Posterior vena cava (tissue), 2 donors: ENCODE measurements at regions of chr17 and their contacts with region 1.

Region 1: GRCh38 chr17:67390646-67391384 is 13.7 kb downstream of the PITPNC1 start:
- DNase-seq: no peak

Region 2: DNA sequence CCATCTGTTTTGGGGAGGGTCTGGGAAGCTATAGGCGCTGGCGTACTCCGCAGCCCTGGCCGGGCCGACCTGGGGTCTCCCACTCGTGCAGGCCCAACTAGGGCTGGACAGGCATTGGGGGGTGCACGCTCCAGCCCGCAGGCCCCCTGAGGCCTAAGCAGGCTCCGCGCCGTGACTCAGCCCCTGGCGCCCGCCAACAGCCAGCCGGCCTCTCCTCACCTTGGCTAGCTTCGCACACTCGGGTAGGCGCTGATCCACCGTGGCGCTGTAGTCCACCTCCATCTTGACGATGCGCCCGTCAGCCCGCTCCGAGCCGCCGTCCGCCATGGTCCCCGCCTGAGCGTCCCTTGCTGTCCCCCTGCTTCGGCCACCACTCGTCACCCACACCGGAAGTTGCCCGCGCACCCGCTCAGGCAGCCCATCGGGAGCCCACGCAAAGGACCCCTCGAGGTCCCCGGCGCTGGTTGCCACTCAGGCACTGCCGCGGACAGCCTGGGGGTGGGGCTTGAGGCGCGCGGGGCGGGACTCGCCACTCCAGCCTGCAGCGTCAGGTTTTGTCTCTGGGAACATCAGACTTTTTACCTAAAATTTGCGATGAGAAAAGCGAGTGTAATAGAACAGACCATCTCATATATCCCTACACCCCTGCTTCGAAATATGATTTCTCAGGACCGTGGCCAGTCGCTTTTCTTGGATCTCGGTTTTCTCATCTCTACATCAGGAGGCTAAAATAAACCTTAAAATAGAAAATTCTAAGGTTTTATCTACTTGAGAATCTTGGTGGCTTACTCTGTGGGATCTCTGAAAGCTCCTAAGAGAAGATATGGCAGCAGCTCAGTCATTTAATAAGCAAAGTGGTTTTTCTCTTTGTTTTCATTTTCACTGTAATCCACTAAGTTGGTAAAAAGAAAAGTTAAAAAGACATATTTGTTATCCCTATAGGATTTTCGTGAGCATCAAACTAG is 24.3 kb before region 1 on chr17 and contains the start of gene PSMD12:
- intact Hi-C with region 1: no loop called
- DNase-seq: peak; percentile 98
- total RNA-seq, gene PSMD12: 43.5 to 63.0 TPM

Region 3: GRCh38 chr17:67376737-67377487 is 13.9 kb before region 1 on chr17 and contains the start of gene PITPNC1:
- intact Hi-C with region 1: no loop called
- DNase-seq: peak; percentile 96
- total RNA-seq, gene PITPNC1: 22.3 to 24.3 TPM

Region 4: DNA sequence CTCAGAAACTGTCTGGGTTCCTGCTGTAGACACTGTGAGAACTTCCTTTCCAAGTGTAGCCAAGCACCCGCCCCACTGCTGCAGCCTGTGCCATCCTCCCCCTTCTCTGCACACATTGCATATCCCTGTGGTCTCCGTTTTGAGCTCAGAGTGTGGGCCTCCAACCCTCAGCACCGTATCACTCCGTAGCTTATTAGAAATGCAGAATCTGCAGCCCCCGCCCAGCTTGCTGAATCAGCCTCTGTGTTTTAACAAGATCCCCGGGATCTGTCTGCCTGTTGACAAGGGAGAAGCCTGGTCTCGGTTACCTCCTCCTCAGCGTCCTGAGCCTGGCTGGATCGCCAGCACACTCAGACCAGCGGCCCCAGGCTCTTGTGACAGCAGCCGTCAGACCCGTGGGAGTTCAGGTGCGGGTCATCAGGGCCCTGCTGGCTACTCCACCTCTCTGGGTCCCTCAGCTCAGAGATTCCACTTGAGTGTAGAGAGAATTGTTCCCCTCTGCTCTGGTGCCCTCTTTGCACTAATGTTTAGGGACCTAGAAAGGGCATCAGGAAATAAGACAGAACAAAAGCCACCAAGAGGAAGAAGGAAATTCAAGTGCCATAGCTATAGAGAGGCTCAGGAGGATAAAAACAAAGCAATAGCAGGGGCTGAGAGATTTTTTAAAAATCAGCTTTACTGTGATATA is 78.5 kb after region 1 on chr17:
- intact Hi-C with region 1: loop called in 1 of 2 experiments (anchors 10 kb)
- DNase-seq: no peak

Region 5: DNA sequence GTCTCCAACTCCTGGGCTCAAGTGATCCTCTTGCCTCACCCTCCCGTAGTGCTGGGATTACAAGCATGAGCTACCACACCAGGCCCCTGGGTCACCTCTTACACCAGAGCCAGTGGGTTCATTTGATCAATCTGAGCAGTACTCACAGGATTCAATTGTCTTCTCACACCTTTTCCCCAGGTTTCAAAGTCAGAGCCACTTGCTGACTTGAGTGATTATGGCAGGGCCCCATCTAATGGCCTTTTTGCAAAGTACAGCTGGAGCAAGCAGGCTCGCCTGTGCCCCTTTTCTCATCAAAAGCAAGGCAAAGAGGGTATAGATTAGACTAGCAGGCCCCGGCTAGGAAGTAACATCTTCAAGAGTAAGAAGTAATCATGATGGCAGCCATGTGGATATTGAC is 212.1 kb after region 1 on chr17:
- intact Hi-C with region 1: loop called in 1 of 2 experiments (anchors 10 kb)
- DNase-seq: no peak